ENCODE measurements at regions of chr1 and their contacts with region 1.

Region 1: GRCh38 chr1:45011837-45012638 is at the start of gene UROD:
- DNase-seq: peak; percentile 93
- ATAC-seq: peak; percentile 72
- H3K4me3 ChIP-seq: peak within 1 kb of the TSS; percentile 74 to 75
- H3K27ac ChIP-seq: peak within 1 kb of the TSS; percentile 65
- H3K4me1 ChIP-seq: peaks cover 9 to 28% of the 10 kb centered on the region in 2 experiments; a peak in 3 of 4 replicates
- H3K27me3 ChIP-seq: no peaks in the 10 kb centered on the region
- CTCF ChIP-seq: no peak
- POLR2A ChIP-seq: peak; percentile 85
- RAD21 ChIP-seq: peak; percentile 2; the same call in 1 of the 2 replicates
- total RNA-seq, gene UROD: 73.7 TPM

Region 2: DNA sequence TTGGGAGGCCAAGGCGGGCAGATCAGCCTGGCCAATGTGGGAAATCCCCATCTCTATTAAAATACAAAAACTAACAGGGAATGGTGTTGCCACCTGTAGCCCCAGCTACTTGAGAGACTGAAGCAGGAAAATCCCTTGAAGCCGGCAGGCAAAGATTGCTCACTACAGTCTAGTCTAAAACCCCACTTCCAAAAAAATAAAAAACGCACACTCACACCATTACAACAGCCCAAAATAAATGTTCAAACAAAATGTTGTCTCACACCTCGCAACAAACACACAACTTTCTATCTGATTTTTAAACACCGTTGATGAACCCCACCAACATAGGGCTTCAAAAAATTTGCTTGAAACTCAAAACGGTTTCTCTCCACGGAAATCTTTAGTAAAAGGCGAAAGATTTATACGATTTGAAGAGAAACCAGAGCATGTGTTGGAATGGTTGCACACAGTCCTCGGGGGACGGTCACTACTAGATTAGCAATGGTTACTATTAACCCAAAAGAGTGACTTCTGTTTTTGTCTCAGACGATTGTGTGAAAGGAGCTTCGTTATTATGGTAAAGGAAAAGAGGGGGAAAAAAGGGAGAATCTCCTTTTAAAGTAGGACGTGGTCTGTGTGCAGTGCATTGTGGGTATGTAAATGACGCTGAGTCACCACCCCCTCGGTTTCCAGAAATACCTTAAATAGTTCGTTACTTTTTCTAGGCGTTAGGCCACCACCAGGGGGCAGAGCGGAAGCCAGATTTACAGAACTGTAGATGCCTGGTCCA is 281.1 kb before region 1 on chr1 and contains the start of gene RNU5D-1:
- CTCF ChIA-PET with region 1: no interaction called
- POLR2A ChIA-PET with region 1: no interaction called
- RAD21 ChIA-PET with region 1: no interaction called
- intact Hi-C with region 1: loop called (anchors 5 kb)
- DNase-seq: peak; percentile 98
- ATAC-seq: peak; percentile 77
- H3K4me3 ChIP-seq: peak within 1 kb of the TSS in 1 of 2 experiments; percentile 3; a peak in 1 of 4 replicates
- H3K27ac ChIP-seq: peak within 1 kb of the TSS; percentile 86
- H3K4me1 ChIP-seq: peaks cover 34 to 70% of the 10 kb centered on the region in 2 experiments
- H3K27me3 ChIP-seq: no peaks in the 10 kb centered on the region
- CTCF ChIP-seq: peak; percentile 47 to 82 (median 75); a peak in 5 of 6 replicates
- POLR2A ChIP-seq: peak; percentile 100
- RAD21 ChIP-seq: peak; percentile 44
- total RNA-seq, gene RNU5D-1: not detected

Region 3: DNA sequence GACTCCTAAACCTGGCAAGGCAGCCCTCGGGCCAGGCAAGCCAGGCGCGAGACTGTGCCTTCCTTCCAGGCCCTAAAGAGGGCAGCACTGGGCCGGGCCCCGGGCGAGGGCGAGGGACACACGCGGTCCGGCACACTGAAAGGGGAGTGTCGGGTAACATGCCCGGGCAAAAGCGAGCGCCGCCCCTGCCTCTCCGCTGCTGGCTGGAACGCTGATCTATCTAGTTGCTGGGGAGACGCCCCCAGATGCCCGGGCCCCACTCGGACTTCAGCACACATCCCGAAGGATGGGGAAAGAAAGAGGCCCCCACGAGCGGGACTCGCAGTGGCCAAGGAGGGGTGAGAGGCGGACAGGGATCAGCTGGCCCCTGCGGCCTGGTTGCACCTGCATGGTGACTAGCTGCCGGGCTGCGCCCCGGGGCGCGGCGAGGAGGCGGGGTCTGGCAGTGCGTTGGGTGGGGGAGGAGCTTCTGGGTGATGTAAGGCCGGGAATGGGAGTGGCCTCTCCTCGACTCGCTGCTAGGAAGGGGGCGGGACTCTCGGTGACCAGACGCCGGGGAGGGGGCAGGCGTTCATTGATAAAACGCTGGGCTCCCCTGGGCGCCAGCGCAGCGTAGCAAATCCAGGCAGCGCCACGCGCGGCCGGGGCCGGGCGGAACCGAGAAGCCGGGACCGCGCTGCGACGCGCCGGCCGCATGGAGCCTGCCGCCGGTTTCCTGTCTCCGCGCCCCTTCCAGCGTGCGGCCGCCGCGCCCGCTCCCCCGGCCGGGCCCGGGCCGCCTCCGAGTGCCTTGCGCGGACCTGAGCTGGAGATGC is 212.1 kb before region 1 on chr1 and contains the start of gene PLK3:
- CTCF ChIA-PET with region 1: interaction called, 16 read pairs
- POLR2A ChIA-PET with region 1: interaction called, 18 read pairs
- RAD21 ChIA-PET with region 1: interaction called in 1 of 2 experiments, 3 read pairs
- intact Hi-C with region 1: no loop called
- DNase-seq: peak; percentile 96
- ATAC-seq: peak; percentile 86
- H3K4me3 ChIP-seq: peak within 1 kb of the TSS; percentile 87 to 91
- H3K27ac ChIP-seq: peak within 1 kb of the TSS; percentile 84
- H3K4me1 ChIP-seq: peaks cover 19 to 71% of the 10 kb centered on the region in 2 experiments
- H3K27me3 ChIP-seq: no peaks in the 10 kb centered on the region
- CTCF ChIP-seq: peak in 2 of 3 experiments; percentile 81 to 91; a peak in 4 of 6 replicates
- POLR2A ChIP-seq: peak; percentile 97
- RAD21 ChIP-seq: no peak
- total RNA-seq, gene PLK3: 56.1 TPM

Region 4: DNA sequence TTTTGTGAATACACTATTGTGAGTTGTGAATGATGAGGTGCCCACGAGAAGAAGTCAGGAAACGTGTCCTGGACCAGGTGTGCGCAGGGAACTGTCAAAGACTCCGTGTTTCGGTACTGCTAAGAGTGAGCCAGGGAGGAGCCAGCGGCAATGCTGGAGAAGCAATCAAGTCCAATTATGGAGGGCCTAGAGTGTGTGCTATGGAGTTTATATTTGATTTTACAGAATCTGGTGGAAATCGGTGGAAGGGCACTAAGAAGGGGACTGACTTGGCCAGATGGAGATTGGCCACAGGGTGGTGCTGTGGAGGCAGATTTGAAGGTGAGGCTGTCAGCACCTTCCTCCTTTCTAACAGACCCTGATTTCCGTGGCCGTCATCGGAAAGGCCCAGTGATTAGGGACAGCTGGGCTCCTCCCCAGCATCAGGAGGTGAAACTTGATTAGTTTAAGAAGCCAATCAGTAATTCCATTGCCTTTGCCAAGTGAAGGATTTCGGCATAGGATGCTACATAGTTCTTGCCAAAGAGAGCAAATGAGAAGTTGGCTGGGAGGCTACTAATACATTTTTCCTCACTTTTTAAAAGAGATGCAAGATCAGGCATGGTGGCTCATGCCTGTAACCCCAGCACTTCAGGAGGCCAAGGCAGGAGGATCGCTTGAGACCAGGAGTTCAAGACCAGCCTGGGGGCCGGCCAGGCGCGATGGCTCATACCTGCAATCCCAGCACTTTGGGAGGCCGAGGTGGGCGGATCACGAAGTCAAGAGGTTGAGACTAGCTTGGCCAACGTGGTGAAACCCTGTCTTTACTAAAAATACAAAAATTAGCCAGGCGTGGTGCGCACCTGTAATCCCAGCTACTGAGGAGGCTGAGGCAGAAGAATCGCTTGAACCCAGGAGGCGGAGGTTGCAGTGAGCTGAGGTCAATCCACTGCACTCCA is 176.0 kb before region 1 on chr1:
- CTCF ChIA-PET with region 1: interaction called, 7 read pairs
- POLR2A ChIA-PET with region 1: interaction called, 3 read pairs
- RAD21 ChIA-PET with region 1: interaction called in 1 of 2 experiments, 8 read pairs
- intact Hi-C with region 1: loop called (anchors 5 kb)
- DNase-seq: peak; percentile 77
- ATAC-seq: peak; percentile 94
- H3K4me3 ChIP-seq: no peak overlapping the region
- H3K27ac ChIP-seq: no peak overlapping the region
- H3K4me1 ChIP-seq: peaks cover 0 to 10% of the 10 kb centered on the region in 2 experiments; a peak in 1 of 4 replicates
- H3K27me3 ChIP-seq: no peaks in the 10 kb centered on the region
- CTCF ChIP-seq: peak; percentile 63 to 90 (median 90)
- POLR2A ChIP-seq: no peak
- RAD21 ChIP-seq: peak; percentile 88

Region 5: DNA sequence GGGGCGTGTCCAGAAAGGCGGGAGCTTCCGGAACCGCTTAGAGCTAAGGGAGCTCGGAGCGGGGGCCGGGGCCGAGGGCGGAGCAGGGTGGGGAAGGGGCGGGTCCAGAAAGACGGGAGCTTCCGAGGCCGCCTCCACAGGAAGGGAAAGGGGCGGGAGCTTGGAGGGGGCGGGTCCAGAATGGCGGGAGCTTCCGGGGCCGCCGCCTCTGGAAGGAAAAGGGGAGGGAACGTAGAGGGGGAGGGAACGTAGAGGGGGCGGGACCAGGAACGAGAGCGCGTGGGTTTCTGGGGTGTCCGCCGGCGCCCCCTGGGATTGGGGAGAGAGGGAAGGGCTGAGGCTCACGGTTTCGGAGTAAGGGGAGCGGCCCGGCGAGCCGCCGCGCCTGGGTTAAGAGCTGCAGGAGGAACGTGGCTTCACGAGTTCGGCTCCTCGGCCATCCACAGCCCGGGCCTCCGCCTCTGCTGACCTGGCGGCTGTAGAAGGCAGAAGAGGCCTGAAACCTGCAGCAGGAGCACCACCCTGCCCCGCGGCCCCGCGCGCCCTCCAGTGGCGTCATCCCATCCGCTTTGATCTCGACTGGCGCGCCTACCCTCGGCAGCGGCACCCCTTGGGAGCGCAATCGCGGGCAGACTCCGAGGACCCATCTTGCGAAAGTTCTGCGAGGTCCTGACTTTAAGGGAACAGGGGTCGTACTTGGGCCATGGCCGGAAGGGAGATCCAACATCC is 291.7 kb after region 1 on chr1:
- CTCF ChIA-PET with region 1: interaction called, 214 read pairs
- POLR2A ChIA-PET with region 1: interaction called, 35 read pairs
- RAD21 ChIA-PET with region 1: interaction called, 5 to 9 read pairs
- intact Hi-C with region 1: loop called (anchors 1 kb)
- DNase-seq: peak; percentile 94
- ATAC-seq: peak; percentile 89
- H3K4me3 ChIP-seq: peak overlapping the region; percentile 69 to 70
- H3K27ac ChIP-seq: peak overlapping the region; percentile 82
- H3K4me1 ChIP-seq: peaks cover 12 to 41% of the 10 kb centered on the region in 2 experiments
- H3K27me3 ChIP-seq: no peaks in the 10 kb centered on the region
- CTCF ChIP-seq: peak; percentile 52 to 95 (median 58)
- POLR2A ChIP-seq: peak; percentile 61
- RAD21 ChIP-seq: peak; percentile 83

Region 6: DNA sequence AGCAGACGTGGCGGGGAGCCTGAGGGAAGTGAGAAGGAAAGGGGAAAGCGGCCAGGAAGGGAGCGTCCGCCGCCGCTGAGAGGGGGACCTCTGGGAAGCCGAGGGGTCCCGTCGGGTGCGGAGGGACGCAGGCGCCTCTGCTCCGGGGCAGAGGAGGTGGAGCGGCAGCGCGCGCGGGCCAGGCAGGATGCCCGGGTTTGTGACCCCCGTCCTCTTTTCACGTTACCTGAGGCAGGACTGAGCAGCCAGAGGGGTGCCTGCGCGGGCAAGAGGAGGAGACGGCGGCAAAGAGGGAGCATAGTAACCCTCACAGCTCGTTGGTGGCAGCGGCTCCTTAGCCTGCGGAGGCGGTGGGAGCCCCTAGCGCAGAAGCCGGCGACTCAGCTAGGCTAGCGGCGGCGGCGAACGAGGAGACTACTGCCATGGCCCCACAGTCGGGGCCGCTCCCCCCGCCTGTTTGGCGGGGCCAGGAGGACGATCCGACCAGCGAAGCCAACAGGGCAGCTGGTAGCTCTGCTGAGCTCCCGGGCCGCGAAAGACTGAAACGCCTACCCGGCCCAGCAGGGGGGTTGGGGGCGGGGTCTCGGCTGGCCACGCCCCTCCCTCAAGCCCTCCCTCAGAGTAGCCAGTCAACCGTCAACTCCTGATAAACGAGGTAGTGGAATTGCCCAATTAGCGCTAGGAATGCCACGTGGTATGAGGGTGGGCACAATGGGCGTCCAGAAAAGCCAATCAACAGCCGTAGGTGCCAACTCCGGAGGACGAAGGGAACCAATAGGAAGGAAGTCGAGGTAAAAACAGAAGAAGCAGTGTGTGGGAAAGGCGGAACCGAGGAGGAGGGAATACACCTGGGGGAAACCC is 478.8 kb after region 1 on chr1 and contains the start of gene TESK2:
- CTCF ChIA-PET with region 1: interaction called, 58 read pairs
- POLR2A ChIA-PET with region 1: interaction called, 7 read pairs
- RAD21 ChIA-PET with region 1: interaction called in 1 of 2 experiments, 10 read pairs
- intact Hi-C with region 1: loop called (anchors 1 kb)
- DNase-seq: peak; percentile 100
- ATAC-seq: peak; percentile 94
- H3K4me3 ChIP-seq: peak within 1 kb of the TSS; percentile 73 to 75
- H3K27ac ChIP-seq: peak within 1 kb of the TSS; percentile 19; the same call in 1 of the 2 replicates
- H3K4me1 ChIP-seq: peaks cover 12 to 18% of the 10 kb centered on the region in 2 experiments
- H3K27me3 ChIP-seq: no peaks in the 10 kb centered on the region
- CTCF ChIP-seq: no peak
- POLR2A ChIP-seq: no peak
- RAD21 ChIP-seq: 0 out of 2 replicates have a peak, but pooled peaks have one; percentile 7
- total RNA-seq, gene TESK2: 5.0 TPM

Region 7: GRCh38 chr1:45908611-45909140 is 896.6 kb after region 1 on chr1:
- CTCF ChIA-PET with region 1: no interaction called
- POLR2A ChIA-PET with region 1: no interaction called
- RAD21 ChIA-PET with region 1: no interaction called
- intact Hi-C with region 1: loop called (anchors 10 kb)
- DNase-seq: no peak
- ATAC-seq: no peak
- H3K4me3 ChIP-seq: no peak overlapping the region
- H3K27ac ChIP-seq: no peak overlapping the region
- H3K4me1 ChIP-seq: peaks cover 0 to 3% of the 10 kb centered on the region in 2 experiments; a peak in 1 of 4 replicates
- H3K27me3 ChIP-seq: no peaks in the 10 kb centered on the region
- CTCF ChIP-seq: no peak
- POLR2A ChIP-seq: no peak
- RAD21 ChIP-seq: no peak

Measured in HCT116 (cell line).